BJ (cell line): ENCODE measurements at regions of chr2 and their contacts with region 1.

Region 1: DNA sequence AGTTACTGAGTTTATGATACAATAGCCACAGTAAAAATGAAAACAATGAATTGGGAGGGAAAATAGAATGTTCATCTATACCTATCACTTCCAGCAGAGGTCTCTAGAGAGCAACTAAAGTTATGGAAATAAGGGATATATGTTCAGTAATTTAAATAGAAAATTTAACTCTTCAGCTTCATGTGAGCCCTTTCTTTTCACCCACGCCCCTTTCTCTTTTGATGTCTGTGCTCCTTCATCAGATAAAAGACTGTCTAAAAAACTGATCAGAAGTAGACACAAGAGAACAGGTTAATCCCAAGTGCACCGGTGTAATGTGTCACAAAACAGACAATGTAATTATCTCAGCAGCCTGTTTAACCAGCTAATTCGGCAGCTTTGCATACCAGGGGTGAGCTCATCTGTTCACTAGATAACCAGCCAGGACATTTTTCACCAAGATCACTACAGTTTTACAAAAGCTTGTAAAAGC is 238.5 kb upstream of the ERBB4 start:
- DNase-seq: no peak
- H3K4me3 ChIP-seq: no peak overlapping the region
- H3K27me3 ChIP-seq: no peaks in the 10 kb centered on the region
- CTCF ChIP-seq: peak; percentile 53

Region 2: DNA sequence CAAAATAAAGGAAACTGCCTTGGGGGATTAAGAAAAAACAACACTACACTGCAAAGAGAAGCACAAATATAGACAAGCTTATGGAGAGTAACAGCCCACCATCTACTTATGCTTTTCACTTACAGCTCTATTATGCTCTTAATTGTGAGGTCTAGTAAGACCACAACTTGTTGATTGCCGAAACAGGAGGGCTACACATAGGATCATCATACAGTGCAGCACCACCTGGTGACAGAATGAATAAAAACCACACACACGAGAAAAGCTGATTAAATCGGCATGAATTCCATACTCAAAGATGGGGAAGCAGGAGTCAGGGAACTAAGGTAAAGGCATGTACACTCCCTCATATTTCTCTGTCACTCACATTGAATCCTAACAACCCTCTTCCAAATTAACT is 115.1 kb after region 1 on chr2:
- CTCF ChIA-PET with region 1: interaction called, 10 read pairs
- POLR2A ChIA-PET with region 1: no interaction called
- DNase-seq: no peak
- H3K4me3 ChIP-seq: no peak overlapping the region
- H3K27me3 ChIP-seq: no peaks in the 10 kb centered on the region
- CTCF ChIP-seq: peak; percentile 48